Caco-2 (cell line): ENCODE measurements at regions of chr14 and their contacts with region 1.

Region 1: DNA sequence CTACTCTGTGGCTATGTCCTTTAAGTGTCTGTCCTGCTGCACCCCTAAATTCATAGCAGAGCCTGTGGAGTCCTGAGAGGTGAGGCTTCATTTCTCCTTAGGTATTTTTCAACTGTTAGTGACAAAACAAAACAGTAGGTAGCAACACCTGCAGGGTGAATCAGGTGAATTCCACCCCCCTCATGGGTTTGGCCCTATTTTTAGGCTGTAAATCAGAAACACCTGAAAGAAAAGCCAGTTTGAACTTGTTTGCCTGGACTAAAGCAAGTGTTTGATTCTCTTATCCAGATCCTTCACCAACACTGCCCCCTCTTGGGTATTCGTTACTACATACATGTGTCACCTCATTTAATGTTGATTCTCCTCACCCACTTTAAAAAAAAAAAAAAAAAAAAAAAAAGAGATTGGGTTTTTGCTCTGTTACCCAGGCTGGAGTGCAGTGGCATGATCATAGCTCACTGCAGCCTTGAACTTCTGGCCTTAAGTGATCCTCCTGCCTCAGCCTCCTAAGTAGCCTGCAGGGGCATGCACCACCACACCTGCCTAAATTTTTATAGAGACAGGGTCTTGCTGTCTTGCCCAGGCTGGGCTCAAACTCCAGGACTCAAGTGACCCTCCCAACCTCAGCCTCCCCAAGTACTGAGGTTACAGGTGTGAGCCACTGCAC is 10.3 kb downstream of the TBPL2 start:
- DNase-seq: peak; percentile 49 to 69
- H3K4me3 ChIP-seq: no peak overlapping the region
- H3K4me3 Mint-ChIP-seq: no peak overlapping the region
- H3K27ac Mint-ChIP-seq: no peak overlapping the region
- H3K4me1 ChIP-seq: no peaks in the 10 kb centered on the region; the same call in 1 of the 2 replicates
- H3K4me1 Mint-ChIP-seq: peaks cover 13% of the 10 kb centered on the region
- H3K27me3 ChIP-seq: no peaks in the 10 kb centered on the region
- H3K27me3 Mint-ChIP-seq: no peaks in the 10 kb centered on the region
- CTCF ChIP-seq: peak; percentile 36 to 38

Region 2: GRCh38 chr14:55212634-55213033 is 217.5 kb before region 1 on chr14:
- CTCF ChIA-PET with region 1: no interaction called
- POLR2A ChIA-PET with region 1: no interaction called
- intact Hi-C with region 1: loop called (anchors 1 kb)
- DNase-seq: no peak
- H3K4me3 ChIP-seq: no peak overlapping the region
- H3K4me3 Mint-ChIP-seq: no peak overlapping the region
- H3K27ac Mint-ChIP-seq: no peak overlapping the region
- H3K4me1 ChIP-seq: no peaks in the 10 kb centered on the region
- H3K4me1 Mint-ChIP-seq: peaks cover 13% of the 10 kb centered on the region
- H3K27me3 ChIP-seq: no peaks in the 10 kb centered on the region
- H3K27me3 Mint-ChIP-seq: no peaks in the 10 kb centered on the region
- CTCF ChIP-seq: no peak

Region 3: DNA sequence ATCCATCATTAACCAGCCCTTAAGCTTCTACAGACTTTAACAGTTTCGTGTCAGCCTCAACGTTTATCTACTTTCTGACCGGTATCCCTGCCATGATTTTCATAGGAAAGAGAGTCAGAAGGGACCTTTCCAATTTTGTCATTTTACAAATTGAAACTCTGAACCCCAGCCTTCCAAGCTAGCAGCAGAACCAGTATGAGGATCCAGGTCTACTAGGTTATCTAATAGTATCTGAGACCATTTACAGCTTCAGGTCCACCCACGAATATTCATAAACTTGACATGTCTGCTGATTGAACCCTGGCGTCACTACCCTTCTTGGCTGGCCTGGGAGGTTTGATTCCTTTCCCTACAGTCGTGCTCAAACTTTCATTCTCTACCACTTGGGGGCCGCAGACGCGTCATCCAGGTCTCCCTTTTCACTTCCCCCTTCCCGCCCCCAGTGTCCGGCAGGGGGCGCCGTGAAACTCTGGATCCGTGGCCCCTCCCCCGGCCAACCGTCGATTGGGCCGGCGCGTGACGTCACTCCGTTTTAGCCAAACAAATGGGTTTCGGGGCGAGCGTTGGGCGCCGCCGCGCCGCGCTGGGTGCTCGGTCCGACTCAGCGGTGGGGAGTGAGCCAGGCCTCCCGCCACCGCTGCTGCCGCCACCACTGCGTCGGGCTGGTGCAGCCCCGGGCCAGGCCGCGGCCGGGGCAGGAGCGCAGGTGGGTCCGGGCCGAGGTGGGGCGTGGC is 159.2 kb before region 1 on chr14 and contains the start of gene FBXO34:
- CTCF ChIA-PET with region 1: interaction called, 4 read pairs
- POLR2A ChIA-PET with region 1: no interaction called
- intact Hi-C with region 1: loop called (anchors 1 kb)
- DNase-seq: peak; percentile 97 to 99
- H3K4me3 ChIP-seq: peak within 1 kb of the TSS; percentile 100
- H3K4me3 Mint-ChIP-seq: peak within 1 kb of the TSS; percentile 84
- H3K27ac Mint-ChIP-seq: peak within 1 kb of the TSS; percentile 94
- H3K4me1 ChIP-seq: peaks cover 45% of the 10 kb centered on the region
- H3K4me1 Mint-ChIP-seq: peaks cover 32% of the 10 kb centered on the region
- H3K27me3 ChIP-seq: no peaks in the 10 kb centered on the region
- H3K27me3 Mint-ChIP-seq: no peaks in the 10 kb centered on the region
- CTCF ChIP-seq: peak; percentile 98
- total RNA-seq, gene FBXO34: 23.7 and 27.3 TPM in 2 replicates

Region 4: DNA sequence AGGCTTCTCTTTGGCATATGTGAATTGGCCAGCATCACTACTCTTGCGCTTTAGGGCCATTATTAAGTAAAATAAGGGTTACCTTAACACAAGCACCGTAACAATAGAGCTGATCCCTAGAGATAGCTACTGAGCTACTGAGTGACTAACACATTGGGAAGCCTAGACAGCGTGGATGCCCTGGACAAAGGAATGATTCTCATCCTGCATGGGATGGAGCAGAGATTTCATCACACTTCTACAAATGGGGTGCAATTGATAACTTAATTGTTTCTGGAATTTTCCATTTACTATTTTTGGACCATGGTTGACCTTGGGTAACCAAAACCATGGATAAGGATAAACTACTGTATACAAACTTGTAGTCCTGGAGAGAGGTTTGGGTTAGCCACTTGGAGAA is 101.8 kb before region 1 on chr14:
- CTCF ChIA-PET with region 1: interaction called, 10 read pairs
- POLR2A ChIA-PET with region 1: no interaction called
- intact Hi-C with region 1: no loop called
- DNase-seq: no peak
- H3K4me3 ChIP-seq: no peak overlapping the region
- H3K4me3 Mint-ChIP-seq: no peak overlapping the region
- H3K27ac Mint-ChIP-seq: no peak overlapping the region
- H3K4me1 ChIP-seq: peaks cover 13% of the 10 kb centered on the region
- H3K4me1 Mint-ChIP-seq: peaks cover 33% of the 10 kb centered on the region
- H3K27me3 ChIP-seq: no peaks in the 10 kb centered on the region
- H3K27me3 Mint-ChIP-seq: no peaks in the 10 kb centered on the region
- CTCF ChIP-seq: no peak

Region 5: GRCh38 chr14:55654243-55654642 is 224.1 kb after region 1 on chr14:
- CTCF ChIA-PET with region 1: no interaction called
- POLR2A ChIA-PET with region 1: no interaction called
- intact Hi-C with region 1: loop called (anchors 10 kb)
- DNase-seq: peak in 1 of 2 experiments; percentile 11
- H3K4me3 ChIP-seq: no peak overlapping the region
- H3K4me3 Mint-ChIP-seq: no peak overlapping the region
- H3K27ac Mint-ChIP-seq: no peak overlapping the region
- H3K4me1 ChIP-seq: peaks cover 13% of the 10 kb centered on the region
- H3K4me1 Mint-ChIP-seq: no peaks in the 10 kb centered on the region
- H3K27me3 ChIP-seq: no peaks in the 10 kb centered on the region
- H3K27me3 Mint-ChIP-seq: no peaks in the 10 kb centered on the region
- CTCF ChIP-seq: no peak